Heart right ventricle (tissue), 16 donors: ENCODE measurements at regions of chr21 and their contacts with region 1.

Region 1: GRCh38 chr21:28943631-28944030 is 49.0 kb downstream of the LTN1 start:
- DNase-seq: no peak
- ATAC-seq: no peak
- H3K4me3 ChIP-seq: no peak overlapping the region
- H3K27ac ChIP-seq: no peak overlapping the region
- H3K4me1 ChIP-seq: peaks cover 0 to 11% (median 4%) of the 10 kb centered on the region in 9 donors
- H3K27me3 ChIP-seq: no peaks in the 10 kb centered on the region
- CTCF ChIP-seq: no peak

Region 2: DNA sequence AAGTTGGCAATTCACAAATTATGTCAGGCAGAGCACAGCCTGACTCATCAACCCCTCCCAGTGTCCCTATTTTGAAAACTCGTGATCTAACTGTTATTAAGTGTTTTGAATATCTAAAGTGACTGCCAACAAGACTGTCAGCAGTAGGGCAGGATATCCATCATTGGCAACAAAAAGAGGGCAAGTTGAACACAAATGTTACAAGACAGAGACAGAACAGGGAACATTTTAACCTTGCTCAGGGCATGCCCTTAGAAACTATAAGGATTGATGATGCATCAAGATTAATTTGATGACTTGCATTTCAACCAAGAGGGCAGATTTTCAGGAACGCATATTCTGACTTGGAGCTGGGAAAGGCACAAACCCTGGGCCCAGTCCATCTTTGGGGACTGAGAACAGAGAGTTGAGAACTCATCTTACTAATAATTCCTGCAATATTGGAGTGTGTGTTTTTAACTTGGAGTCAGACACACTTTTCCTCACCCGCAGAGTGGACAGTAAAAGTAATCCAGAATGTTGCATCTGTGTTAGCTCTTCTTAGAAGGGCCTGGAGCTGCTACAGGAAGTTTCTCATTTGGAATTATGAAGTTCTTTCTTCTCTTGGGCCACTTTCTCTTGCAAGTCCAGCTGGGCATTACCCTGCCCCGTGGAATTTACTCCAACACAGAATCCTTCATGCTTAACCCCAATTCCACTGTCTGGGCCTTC is 268.1 kb before region 1 on chr21:
- intact Hi-C with region 1: no loop called
- DNase-seq: no peak
- ATAC-seq: peak in 7 of 8 donors; percentile 46 to 96 (median 83)
- H3K4me3 ChIP-seq: no peak overlapping the region
- H3K27ac ChIP-seq: peak overlapping the region in 6 of 10 donors; percentile 3 to 37 (median 6)
- H3K4me1 ChIP-seq: peaks cover 0 to 19% (median 10%) of the 10 kb centered on the region in 9 donors
- H3K27me3 ChIP-seq: no peaks in the 10 kb centered on the region
- CTCF ChIP-seq: no peak

Region 3: GRCh38 chr21:28793043-28793442 is 150.6 kb before region 1 on chr21:
- intact Hi-C with region 1: loop called in 1 of 10 experiments (anchors 10 kb)
- DNase-seq: peak in 1 of 2 donors; percentile 28
- ATAC-seq: peak in 5 of 8 donors; percentile 58 to 72 (median 64)
- H3K4me3 ChIP-seq: no peak overlapping the region
- H3K27ac ChIP-seq: no peak overlapping the region
- H3K4me1 ChIP-seq: peaks cover 0 to 19% (median 4%) of the 10 kb centered on the region in 9 donors
- H3K27me3 ChIP-seq: no peaks in the 10 kb centered on the region
- CTCF ChIP-seq: peak; percentile 11 to 69 (median 61)

Region 4: GRCh38 chr21:28884976-28885852 is 58.4 kb before region 1 on chr21:
- intact Hi-C with region 1: loop called in 1 of 10 experiments (anchors 2 kb)
- DNase-seq: peak; percentile 86 to 88
- ATAC-seq: peak; percentile 97 to 100 (median 99)
- H3K4me3 ChIP-seq: peak overlapping the region; percentile 42 to 70 (median 60)
- H3K27ac ChIP-seq: peak overlapping the region; percentile 80 to 97 (median 92)
- H3K4me1 ChIP-seq: peaks cover 0 to 19% (median 10%) of the 10 kb centered on the region in 9 donors
- H3K27me3 ChIP-seq: peaks cover 0 to 6% (median 0%) of the 10 kb centered on the region in 7 donors
- CTCF ChIP-seq: no peak